Dorsolateral prefrontal cortex (tissue), 120 donors: ENCODE measurements at regions of chr3 and their contacts with region 1.

Region 1: DNA sequence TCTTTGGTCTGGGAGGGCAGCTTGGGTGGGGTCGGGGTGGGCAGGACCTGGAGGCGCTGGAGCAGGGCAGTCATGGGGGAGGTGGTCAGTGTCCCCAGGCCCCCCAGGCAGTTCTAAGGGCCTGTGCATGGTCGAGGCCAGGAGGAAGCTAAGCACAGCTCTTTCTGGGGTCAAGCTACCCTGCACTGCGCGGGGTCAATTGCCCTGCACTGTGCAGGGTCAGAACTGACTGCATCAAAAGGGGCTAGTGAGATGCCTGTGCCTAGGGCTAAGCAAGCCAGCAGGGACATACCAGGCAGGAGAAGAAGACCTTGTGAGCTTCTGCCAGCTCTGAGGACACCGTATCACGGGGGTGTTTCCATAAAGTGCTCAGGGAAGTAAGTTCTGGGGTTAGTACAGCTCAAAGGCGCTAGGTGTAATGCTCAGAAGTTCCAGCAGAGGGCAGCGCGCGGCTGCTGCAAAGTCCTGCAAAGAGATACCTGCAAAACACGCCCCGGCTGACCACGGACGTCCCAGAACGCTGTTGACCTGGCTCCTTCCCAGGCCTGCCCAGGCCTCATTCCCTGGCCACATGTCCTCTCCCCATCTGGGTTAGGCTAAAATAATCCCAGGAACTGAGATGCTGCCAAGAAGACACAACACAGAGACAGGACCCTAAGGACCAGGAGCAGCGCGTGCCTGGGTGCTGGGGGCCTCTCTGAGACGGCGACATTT is 18.8 kb upstream of the IQSEC1 start:
- DNase-seq: peak; percentile 80 to 92 (median 88)
- H3K4me3 ChIP-seq: peak overlapping the region in 15 of 59 donors; percentile 6 to 31 (median 22)
- H3K27ac ChIP-seq: peak overlapping the region in 14 of 59 donors; percentile 12 to 62 (median 32)
- H3K27me3 ChIP-seq: no peaks in the 10 kb centered on the region
- CTCF ChIP-seq: peak; percentile 81 to 99 (median 98)

Region 2: GRCh38 chr3:13173186-13173585 is 81.1 kb after region 1 on chr3:
- intact Hi-C with region 1: no loop called
- DNase-seq: no peak
- H3K4me3 ChIP-seq: no peak overlapping the region
- H3K27ac ChIP-seq: no peak overlapping the region
- H3K27me3 ChIP-seq: no peaks in the 10 kb centered on the region
- CTCF ChIP-seq: no peak

Region 3: GRCh38 chr3:13277860-13278531 is 185.9 kb after region 1 on chr3:
- intact Hi-C with region 1: loop called (anchors 5 kb)
- DNase-seq: peak in 3 of 10 donors; percentile 33 to 66 (median 58)
- H3K4me3 ChIP-seq: peak overlapping the region in 49 of 59 donors; percentile 1 to 55 (median 36)
- H3K27ac ChIP-seq: peak overlapping the region; percentile 45 to 92 (median 83)
- H3K27me3 ChIP-seq: no peaks in the 10 kb centered on the region
- CTCF ChIP-seq: no peak

Region 4: GRCh38 chr3:13282986-13283876 is 191.2 kb after region 1 on chr3:
- intact Hi-C with region 1: loop called (anchors 5 kb)
- DNase-seq: peak in 4 of 10 donors; percentile 30 to 65 (median 45)
- H3K4me3 ChIP-seq: peak overlapping the region; percentile 10 to 82 (median 68)
- H3K27ac ChIP-seq: peak overlapping the region in 34 of 59 donors; percentile 8 to 92 (median 58)
- H3K27me3 ChIP-seq: no peaks in the 10 kb centered on the region
- CTCF ChIP-seq: peak in 54 of 56 donors; percentile 6 to 71 (median 44)

Region 5: DNA sequence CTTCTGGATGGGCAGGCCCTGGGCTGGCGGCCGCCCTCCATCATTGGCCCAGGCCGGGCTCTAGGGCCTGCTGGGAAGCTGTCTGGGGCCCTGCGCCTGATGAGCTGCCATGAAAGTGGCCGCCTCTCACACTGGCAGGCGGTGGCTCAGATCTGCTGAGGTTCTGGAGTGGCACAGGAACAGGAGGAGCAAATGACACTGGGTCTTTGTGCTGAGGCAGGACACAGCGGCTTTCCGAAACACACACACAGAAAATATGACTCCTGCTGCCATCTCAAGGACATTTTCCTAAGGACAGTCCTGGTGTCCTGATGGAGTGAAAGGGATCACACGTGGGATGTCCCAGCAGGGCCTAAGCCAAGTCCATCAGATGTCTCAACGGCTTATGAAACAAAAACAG is 224.5 kb after region 1 on chr3:
- intact Hi-C with region 1: loop called (anchors 2 to 10 kb)
- DNase-seq: peak in 5 of 10 donors; percentile 47 to 63 (median 50)
- H3K4me3 ChIP-seq: no peak overlapping the region
- H3K27ac ChIP-seq: peak overlapping the region; percentile 39 to 89 (median 81)
- H3K27me3 ChIP-seq: no peaks in the 10 kb centered on the region
- CTCF ChIP-seq: peak in 29 of 56 donors; percentile 10 to 48 (median 28)